ENCODE measurements at regions of chr20 and their contacts with region 1.

Region 1: DNA sequence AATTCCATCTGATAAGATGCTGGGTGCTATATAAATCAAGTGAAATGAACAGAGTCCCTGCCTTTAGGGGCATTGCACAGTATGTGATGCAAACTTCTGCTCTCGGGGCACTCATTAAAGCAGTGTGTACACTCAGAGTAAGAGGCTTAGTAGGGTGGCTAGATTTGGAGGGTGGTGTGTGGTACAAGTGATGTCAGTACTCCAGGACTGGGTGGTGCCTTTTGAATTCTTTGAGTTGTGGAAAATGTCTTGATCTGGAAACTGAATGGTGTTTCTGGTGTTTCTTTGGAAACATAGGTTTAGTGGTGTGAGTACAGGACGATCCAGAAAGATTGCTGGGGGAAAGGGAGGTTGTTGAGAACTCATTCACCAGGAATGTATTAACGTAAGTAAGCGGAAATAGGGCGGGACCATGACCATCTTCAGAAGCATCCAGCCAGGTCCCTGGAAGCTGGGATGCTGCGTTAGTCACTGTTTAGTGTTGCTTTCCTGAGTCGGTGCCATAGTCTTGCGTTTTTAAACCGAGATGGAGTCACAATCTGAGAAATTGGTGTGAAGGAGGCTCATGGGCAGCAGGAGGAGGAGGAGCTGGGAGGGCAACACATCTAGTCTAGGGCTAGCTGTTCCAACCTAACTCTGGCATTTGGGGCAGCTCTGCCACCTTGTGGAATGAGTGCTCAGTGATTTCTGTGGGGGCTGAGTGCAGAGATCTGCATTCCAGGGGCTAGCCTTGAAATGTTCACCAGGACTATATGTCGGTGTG is 70.3 kb downstream of the SCAND1 start:
- DNase-seq: peak; percentile 67 to 74 (median 71)
- ATAC-seq: peak; percentile 76 to 86 (median 83)
- H3K4me3 ChIP-seq: peak overlapping the region in 2 of 12 donors; percentile 14 to 25
- H3K27ac ChIP-seq: peak overlapping the region in 8 of 12 donors; percentile 3 to 78 (median 53)
- H3K4me1 ChIP-seq: peaks cover 0 to 25% (median 9%) of the 10 kb centered on the region in 12 donors
- H3K27me3 ChIP-seq: no peaks in the 10 kb centered on the region
- CTCF ChIP-seq: peak; percentile 56 to 79 (median 72)
- POLR2A ChIP-seq: no peak

Region 2: GRCh38 chr20:35463455-35464300 is 420.3 kb before region 1 on chr20:
- intact Hi-C with region 1: loop called in 3 of 10 experiments (anchors 10 kb)
- DNase-seq: peak in 4 of 5 donors; percentile 34 to 44 (median 38)
- ATAC-seq: peak; percentile 24 to 79 (median 76)
- H3K4me3 ChIP-seq: no peak overlapping the region
- H3K27ac ChIP-seq: no peak overlapping the region
- H3K4me1 ChIP-seq: peaks cover 0 to 6% (median 0%) of the 10 kb centered on the region in 12 donors
- H3K27me3 ChIP-seq: no peaks in the 10 kb centered on the region
- CTCF ChIP-seq: peak; percentile 67 to 90 (median 78)
- POLR2A ChIP-seq: no peak

Region 3: GRCh38 chr20:35541783-35542588 is 342.0 kb before region 1 on chr20 and contains the start of gene ERGIC3:
- intact Hi-C with region 1: no loop called
- DNase-seq: peak; percentile 97 to 98 (median 98)
- ATAC-seq: peak; percentile 98 to 100 (median 100)
- H3K4me3 ChIP-seq: peak within 1 kb of the TSS; percentile 64 to 96 (median 88)
- H3K27ac ChIP-seq: peak within 1 kb of the TSS in 11 of 12 donors; percentile 23 to 83 (median 74)
- H3K4me1 ChIP-seq: peaks cover 0 to 18% (median 12%) of the 10 kb centered on the region in 12 donors
- H3K27me3 ChIP-seq: no peaks in the 10 kb centered on the region
- CTCF ChIP-seq: peak in 5 of 12 donors; percentile 10 to 42 (median 18)
- POLR2A ChIP-seq: peak in 1 of 2 donors; percentile 63
- total RNA-seq, gene ERGIC3: 83.9 to 152 (median 101) TPM

Region 4: DNA sequence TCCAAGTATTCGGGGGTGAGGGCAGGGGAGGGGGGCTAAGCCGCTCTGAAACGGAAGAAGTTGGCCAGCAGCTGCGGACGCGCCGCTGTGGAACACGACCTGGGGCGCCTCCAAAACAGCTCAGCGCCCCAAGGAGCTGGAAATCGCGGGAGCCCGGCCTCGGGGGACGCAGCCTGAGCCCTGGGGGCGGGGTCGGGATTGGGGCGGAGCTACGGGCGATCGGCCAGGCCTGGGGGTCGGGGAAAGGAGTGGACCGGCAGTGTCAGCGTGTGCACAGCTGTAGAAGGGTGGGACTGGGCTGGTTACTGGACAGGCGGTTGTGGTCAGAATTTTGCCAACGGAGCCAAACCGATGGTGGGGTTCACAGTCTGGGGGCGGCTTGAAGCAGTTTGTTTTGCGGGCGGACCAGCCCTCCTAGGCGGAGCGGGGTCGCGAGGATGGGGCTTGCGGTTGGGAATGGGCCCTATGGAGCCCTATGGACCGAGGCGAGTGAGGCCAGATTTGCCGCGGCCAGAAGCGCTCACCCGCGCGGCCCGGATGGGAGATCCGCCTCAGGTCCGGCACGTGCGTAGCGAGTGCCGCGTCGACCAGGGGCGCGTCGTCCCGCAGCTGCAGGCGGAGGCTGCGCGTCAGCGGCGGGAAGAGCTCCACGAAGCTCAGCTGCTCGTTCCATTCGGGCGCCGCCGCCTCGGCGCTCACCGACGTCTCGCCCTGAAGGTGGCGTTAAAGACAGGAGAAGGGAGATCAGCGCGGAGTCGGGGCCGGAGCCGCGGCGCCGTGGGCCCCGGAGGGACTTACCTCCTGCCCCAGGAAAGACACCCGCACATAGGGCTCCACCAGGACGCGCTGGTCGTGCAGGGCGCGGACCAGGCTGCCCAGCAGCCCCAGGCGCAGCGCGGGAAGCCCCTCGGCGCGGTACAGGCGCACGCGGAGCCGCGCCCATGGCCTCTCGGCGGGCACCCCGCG is 282.7 kb before region 1 on chr20:
- intact Hi-C with region 1: loop called in 6 of 10 experiments (anchors 5 to 10 kb)
- DNase-seq: peak; percentile 63 to 89 (median 78)
- ATAC-seq: peak; percentile 76 to 91 (median 86)
- H3K4me3 ChIP-seq: peak overlapping the region; percentile 21 to 63 (median 52)
- H3K27ac ChIP-seq: no peak overlapping the region
- H3K4me1 ChIP-seq: peaks cover 3 to 19% (median 15%) of the 10 kb centered on the region in 12 donors
- H3K27me3 ChIP-seq: peaks cover 0 to 35% (median 13%) of the 10 kb centered on the region in 9 donors
- CTCF ChIP-seq: peak; percentile 24 to 73 (median 48)
- POLR2A ChIP-seq: no peak

Region 5: DNA sequence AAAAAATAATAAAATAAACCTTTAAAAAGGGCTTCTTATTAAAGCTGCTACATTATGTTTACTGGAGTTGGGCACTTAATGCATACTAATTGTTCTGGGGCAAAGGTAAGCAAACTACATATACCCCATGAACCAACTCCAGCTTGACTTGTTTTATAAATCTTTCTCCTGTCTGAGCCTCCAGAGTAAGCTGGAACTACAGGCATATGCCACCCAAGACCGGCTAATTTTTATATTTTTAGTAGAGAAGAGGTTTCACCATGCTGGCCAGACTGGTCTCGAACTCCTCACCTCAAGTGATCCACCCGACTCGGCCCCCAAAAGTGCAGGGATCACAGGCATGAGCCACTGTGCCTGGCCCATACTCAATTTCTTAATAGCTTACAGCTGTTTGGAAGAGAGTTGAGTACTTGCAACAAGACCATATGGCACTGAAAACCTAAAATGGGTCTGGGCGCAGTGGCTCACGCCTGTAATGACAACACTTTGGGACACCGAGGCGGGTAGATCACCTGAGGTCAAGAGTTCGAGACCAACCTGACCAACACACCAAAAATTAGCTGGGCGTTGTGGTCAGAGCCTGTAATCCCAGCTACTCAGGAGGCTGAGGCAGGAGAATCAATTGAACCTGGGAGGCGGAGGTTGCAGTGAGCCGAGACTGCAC is 164.9 kb before region 1 on chr20:
- intact Hi-C with region 1: loop called in 1 of 10 experiments (anchors 5 kb)
- DNase-seq: no peak
- ATAC-seq: no peak
- H3K4me3 ChIP-seq: no peak overlapping the region
- H3K27ac ChIP-seq: no peak overlapping the region
- H3K4me1 ChIP-seq: peaks cover 0 to 45% (median 22%) of the 10 kb centered on the region in 12 donors
- H3K27me3 ChIP-seq: no peaks in the 10 kb centered on the region
- CTCF ChIP-seq: no peak
- POLR2A ChIP-seq: no peak

Region 6: DNA sequence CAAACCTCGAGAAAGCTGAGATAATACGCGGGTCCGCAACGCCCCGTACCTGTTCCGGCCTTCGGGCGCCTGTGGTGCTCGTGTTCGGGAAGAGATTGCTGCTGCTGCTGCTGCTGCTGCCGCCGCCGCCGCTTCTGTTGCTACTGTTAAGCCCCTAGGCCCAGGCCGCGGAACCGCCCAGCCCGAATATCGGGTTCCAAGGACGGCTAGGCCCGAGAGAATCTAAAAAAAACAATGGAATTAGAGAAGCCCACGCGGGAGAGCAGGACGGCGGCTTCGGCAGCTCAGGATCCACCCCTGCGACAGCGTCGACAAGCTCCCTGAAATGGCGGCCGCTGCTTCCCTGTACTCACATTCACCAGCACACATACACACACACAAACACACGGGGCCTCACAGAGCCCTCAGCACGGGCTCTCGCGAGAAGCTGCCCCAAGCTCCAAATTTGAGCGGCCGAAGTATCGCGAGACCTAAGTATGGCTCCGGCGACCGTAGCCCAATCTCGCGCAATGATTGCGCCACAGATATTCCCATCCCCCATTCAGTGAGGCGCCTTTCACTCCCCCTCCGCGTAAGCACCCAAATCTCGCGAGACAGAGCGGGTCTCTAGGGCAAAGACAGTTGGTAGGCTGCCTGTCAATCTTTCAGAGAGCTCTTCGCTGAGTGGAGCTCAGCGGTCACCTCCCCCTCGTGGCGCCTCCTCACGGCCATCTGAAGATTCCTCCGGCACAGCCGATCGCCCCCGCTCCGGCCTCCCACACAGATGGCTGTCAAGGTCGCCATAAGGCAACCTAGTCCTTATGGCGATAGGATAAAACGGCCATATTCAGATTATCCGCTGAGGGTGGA is 141.8 kb before region 1 on chr20 and contains the start of gene RBM39:
- intact Hi-C with region 1: loop called in 7 of 10 experiments (anchors 5 to 10 kb)
- DNase-seq: peak; percentile 100
- ATAC-seq: peak; percentile 93 to 97 (median 96)
- H3K4me3 ChIP-seq: peak within 1 kb of the TSS; percentile 62 to 91 (median 78)
- H3K27ac ChIP-seq: peak within 1 kb of the TSS; percentile 96 to 100 (median 99)
- H3K4me1 ChIP-seq: peaks cover 7 to 56% (median 34%) of the 10 kb centered on the region in 12 donors
- H3K27me3 ChIP-seq: no peaks in the 10 kb centered on the region
- CTCF ChIP-seq: peak; percentile 19 to 74 (median 46)
- POLR2A ChIP-seq: peak; percentile 73 to 86
- total RNA-seq, gene RBM39: 72.6 to 147 (median 112) TPM

Region 7: GRCh38 chr20:35901678-35902544 is 18.0 kb after region 1 on chr20:
- intact Hi-C with region 1: no loop called
- DNase-seq: no peak
- ATAC-seq: peak in 2 of 4 donors; percentile 65 to 69
- H3K4me3 ChIP-seq: no peak overlapping the region
- H3K27ac ChIP-seq: peak overlapping the region in 1 of 12 donors; percentile 10
- H3K4me1 ChIP-seq: peaks cover 0 to 29% (median 5%) of the 10 kb centered on the region in 12 donors
- H3K27me3 ChIP-seq: no peaks in the 10 kb centered on the region
- CTCF ChIP-seq: no peak
- POLR2A ChIP-seq: no peak

Region 8: GRCh38 chr20:36355469-36356171 is 471.7 kb after region 1 on chr20:
- intact Hi-C with region 1: no loop called
- DNase-seq: no peak
- ATAC-seq: no peak
- H3K4me3 ChIP-seq: no peak overlapping the region
- H3K27ac ChIP-seq: no peak overlapping the region
- H3K4me1 ChIP-seq: no peaks in the 10 kb centered on the region
- H3K27me3 ChIP-seq: peaks cover 0 to 22% (median 0%) of the 10 kb centered on the region in 9 donors
- CTCF ChIP-seq: no peak
- POLR2A ChIP-seq: no peak

Measured in heart left ventricle (tissue), 16 donors.